ENCODE measurements at regions of chr13 and their contacts with region 1.

Region 1: GRCh38 chr13:77544355-77544754 is 8.8 kb downstream of the SCEL start:
- DNase-seq: no peak
- ATAC-seq: no peak
- H3K4me3 ChIP-seq: no peak overlapping the region
- H3K27ac ChIP-seq: no peak overlapping the region
- H3K4me1 ChIP-seq: peaks cover 4% of the 10 kb centered on the region
- H3K27me3 ChIP-seq: no peaks in the 10 kb centered on the region
- CTCF ChIP-seq: no peak
- EP300 ChIP-seq: no peak
- POLR2A ChIP-seq: no peak
- RAD21 ChIP-seq: no peak

Region 2: DNA sequence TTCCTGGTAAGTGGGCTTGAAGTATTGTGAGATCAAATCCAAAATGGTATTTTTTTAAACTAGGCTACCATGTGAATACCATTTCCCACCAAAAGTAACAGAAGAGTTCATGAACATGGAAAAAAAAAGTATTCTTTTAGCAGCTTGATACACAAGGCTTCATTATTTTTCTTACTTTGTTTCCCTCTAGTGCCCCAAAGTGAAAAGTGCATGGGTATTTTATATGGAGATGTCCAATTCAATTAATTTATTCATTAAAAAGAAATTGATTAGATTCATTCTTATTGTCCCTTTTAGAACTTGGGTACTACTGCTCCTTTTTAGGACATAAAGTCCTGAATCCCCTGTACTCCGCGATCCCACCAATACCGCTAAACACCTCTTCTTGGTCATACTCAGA is 37.5 kb before region 1 on chr13:
- CTCF ChIA-PET with region 1: interaction called, 14 read pairs
- POLR2A ChIA-PET with region 1: interaction called, 4 read pairs
- RAD21 ChIA-PET with region 1: interaction called, 4 read pairs
- SMC1A ChIA-PET with region 1: interaction called, 57 read pairs
- in situ Hi-C with region 1: no loop called
- intact Hi-C with region 1: no loop called
- DNase-seq: no peak
- ATAC-seq: no peak
- H3K4me3 ChIP-seq: no peak overlapping the region
- H3K27ac ChIP-seq: no peak overlapping the region
- H3K4me1 ChIP-seq: peaks cover 17% of the 10 kb centered on the region
- H3K27me3 ChIP-seq: no peaks in the 10 kb centered on the region
- CTCF ChIP-seq: peak; percentile 16 to 32 (median 22); a peak in 3 of 6 replicates
- EP300 ChIP-seq: no peak
- POLR2A ChIP-seq: no peak
- RAD21 ChIP-seq: peak; percentile 18; the same call in 1 of the 2 replicates

Region 3: GRCh38 chr13:77516342-77516789 is 28.0 kb before region 1 on chr13:
- CTCF ChIA-PET with region 1: interaction called, 4 read pairs
- POLR2A ChIA-PET with region 1: interaction called, 4 read pairs
- RAD21 ChIA-PET with region 1: interaction called, 6 read pairs
- SMC1A ChIA-PET with region 1: interaction called, 57 read pairs
- in situ Hi-C with region 1: no loop called
- intact Hi-C with region 1: no loop called
- DNase-seq: no peak
- ATAC-seq: peak; percentile 57
- H3K4me3 ChIP-seq: no peak overlapping the region
- H3K27ac ChIP-seq: no peak overlapping the region
- H3K4me1 ChIP-seq: peaks cover 14% of the 10 kb centered on the region; the same call in 1 of the 2 replicates
- H3K27me3 ChIP-seq: no peaks in the 10 kb centered on the region
- CTCF ChIP-seq: no peak
- EP300 ChIP-seq: no peak
- POLR2A ChIP-seq: no peak
- RAD21 ChIP-seq: no peak

Region 4: GRCh38 chr13:77528834-77529505 is 15.4 kb before region 1 on chr13:
- CTCF ChIA-PET with region 1: interaction called, 8 read pairs
- POLR2A ChIA-PET with region 1: interaction called, 10 read pairs
- RAD21 ChIA-PET with region 1: interaction called, 19 read pairs
- SMC1A ChIA-PET with region 1: interaction called, 58 read pairs
- in situ Hi-C with region 1: no loop called
- intact Hi-C with region 1: no loop called
- DNase-seq: no peak
- ATAC-seq: peak; percentile 93
- H3K4me3 ChIP-seq: no peak overlapping the region
- H3K27ac ChIP-seq: no peak overlapping the region
- H3K4me1 ChIP-seq: 0 out of 2 replicates have a peak, but pooled peaks cover 10% of the 10 kb centered on the region
- H3K27me3 ChIP-seq: peaks cover 0 to 3% of the 10 kb centered on the region in 2 experiments; a peak in 1 of 4 replicates
- CTCF ChIP-seq: no peak
- EP300 ChIP-seq: peak; percentile 26 to 64; a peak in 2 of 4 replicates
- POLR2A ChIP-seq: no peak
- RAD21 ChIP-seq: no peak

Region 5: DNA sequence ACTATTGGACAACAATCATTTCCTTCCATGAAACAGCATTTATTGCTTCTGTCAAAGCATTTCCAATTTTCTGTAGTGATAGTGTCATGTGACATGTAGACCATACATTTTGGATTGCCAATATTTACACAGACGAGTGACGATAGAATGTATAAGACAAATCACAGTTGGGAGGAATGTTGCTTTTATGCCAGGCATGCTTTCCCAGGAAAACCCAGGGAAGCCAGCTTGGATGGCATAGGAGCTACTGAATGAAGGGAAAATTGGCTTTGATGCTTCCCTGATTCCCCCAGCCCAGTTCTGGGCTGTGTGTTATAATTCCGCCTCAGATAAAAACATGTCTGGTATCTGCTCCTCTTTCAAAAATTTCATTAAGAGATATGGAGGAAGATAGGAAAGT is 13.7 kb after region 1 on chr13:
- CTCF ChIA-PET with region 1: interaction called, 17 read pairs
- POLR2A ChIA-PET with region 1: interaction called, 10 read pairs
- RAD21 ChIA-PET with region 1: interaction called, 29 read pairs
- SMC1A ChIA-PET with region 1: interaction called, 83 read pairs
- in situ Hi-C with region 1: no loop called
- intact Hi-C with region 1: no loop called
- DNase-seq: no peak
- ATAC-seq: no peak
- H3K4me3 ChIP-seq: no peak overlapping the region
- H3K27ac ChIP-seq: no peak overlapping the region
- H3K4me1 ChIP-seq: peaks cover 15% of the 10 kb centered on the region
- H3K27me3 ChIP-seq: no peaks in the 10 kb centered on the region
- CTCF ChIP-seq: no peak
- EP300 ChIP-seq: no peak
- POLR2A ChIP-seq: no peak
- RAD21 ChIP-seq: no peak

Region 6: GRCh38 chr13:77565635-77566034 is 21.3 kb after region 1 on chr13:
- CTCF ChIA-PET with region 1: interaction called, 17 read pairs
- POLR2A ChIA-PET with region 1: no interaction called
- RAD21 ChIA-PET with region 1: interaction called, 29 read pairs
- SMC1A ChIA-PET with region 1: interaction called, 83 read pairs
- in situ Hi-C with region 1: no loop called
- intact Hi-C with region 1: no loop called
- DNase-seq: no peak
- ATAC-seq: peak; percentile 95
- H3K4me3 ChIP-seq: no peak overlapping the region
- H3K27ac ChIP-seq: no peak overlapping the region
- H3K4me1 ChIP-seq: no peaks in the 10 kb centered on the region
- H3K27me3 ChIP-seq: no peaks in the 10 kb centered on the region
- CTCF ChIP-seq: peak; percentile 44 to 76 (median 52); a peak in 5 of 6 replicates
- EP300 ChIP-seq: no peak
- POLR2A ChIP-seq: no peak
- RAD21 ChIP-seq: peak; percentile 95

Region 7: DNA sequence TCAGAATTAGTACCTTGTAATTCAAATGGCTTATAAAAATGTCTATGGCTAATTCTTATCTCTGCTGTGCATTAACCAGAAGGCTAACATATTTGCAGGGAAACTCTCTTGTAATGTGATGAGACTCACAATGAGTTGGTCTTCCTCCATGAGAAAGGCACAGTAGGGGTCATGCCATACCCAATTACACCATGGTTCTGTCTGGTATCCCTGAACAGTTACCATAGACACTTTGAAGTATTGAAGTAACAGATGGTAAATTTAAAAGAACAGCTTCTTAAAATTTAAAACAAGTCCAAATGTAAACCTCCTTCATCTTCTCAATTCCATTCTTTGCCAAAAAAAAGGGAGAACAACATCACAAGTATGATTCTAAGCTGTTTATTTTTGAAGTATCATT is 130.5 kb after region 1 on chr13:
- CTCF ChIA-PET with region 1: no interaction called
- POLR2A ChIA-PET with region 1: no interaction called
- RAD21 ChIA-PET with region 1: no interaction called
- SMC1A ChIA-PET with region 1: no interaction called
- in situ Hi-C with region 1: no loop called
- intact Hi-C with region 1: no loop called
- DNase-seq: no peak
- ATAC-seq: no peak
- H3K4me3 ChIP-seq: no peak overlapping the region
- H3K27ac ChIP-seq: no peak overlapping the region
- H3K4me1 ChIP-seq: no peaks in the 10 kb centered on the region
- H3K27me3 ChIP-seq: no peaks in the 10 kb centered on the region
- CTCF ChIP-seq: no peak
- EP300 ChIP-seq: no peak
- POLR2A ChIP-seq: no peak
- RAD21 ChIP-seq: no peak